PC-9 (cell line): ENCODE measurements at regions of chr1 and their contacts with region 1.

Region 1: GRCh38 chr1:93808871-93809270 is 70.1 kb downstream of the DNTTIP2 start:
- DNase-seq: peak in 1 of 2 experiments; percentile 32
- H3K4me3 ChIP-seq: no peak overlapping the region
- H3K27ac ChIP-seq: no peak overlapping the region
- H3K4me1 ChIP-seq: peaks cover 57% of the 10 kb centered on the region
- H3K27me3 ChIP-seq: no peaks in the 10 kb centered on the region
- CTCF ChIP-seq: no peak

Region 2: DNA sequence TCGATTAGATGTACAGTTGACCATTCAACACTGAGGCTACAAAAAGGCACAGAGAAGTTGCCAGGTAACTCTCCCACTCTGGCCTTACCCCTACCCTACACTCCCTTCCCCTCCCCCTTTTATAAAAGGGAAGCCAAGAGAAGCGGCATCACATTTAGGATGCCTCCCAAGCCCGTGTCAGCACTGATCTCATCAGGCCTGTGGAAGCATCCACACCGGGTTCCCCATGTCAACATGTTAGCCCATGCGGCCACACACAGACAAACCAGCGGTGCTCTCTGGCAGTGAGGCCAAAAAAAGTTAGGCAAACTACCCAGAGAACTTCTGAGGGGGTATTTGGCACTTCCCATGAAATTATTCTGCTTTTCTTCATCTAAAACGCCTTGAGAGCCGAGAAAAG is 157.2 kb before region 1 on chr1:
- CTCF ChIA-PET with region 1: interaction called, 27 read pairs
- POLR2A ChIA-PET with region 1: no interaction called
- intact Hi-C with region 1: no loop called
- DNase-seq: no peak
- H3K4me3 ChIP-seq: no peak overlapping the region
- H3K27ac ChIP-seq: 0 out of 2 replicates have a peak overlapping the region, but pooled peaks have one; percentile 25
- H3K4me1 ChIP-seq: 0 out of 2 replicates have a peak, but pooled peaks cover 6% of the 10 kb centered on the region
- H3K27me3 ChIP-seq: no peaks in the 10 kb centered on the region
- CTCF ChIP-seq: no peak

Region 3: GRCh38 chr1:93837961-93838360 is 29.1 kb after region 1 on chr1:
- CTCF ChIA-PET with region 1: no interaction called
- POLR2A ChIA-PET with region 1: no interaction called
- intact Hi-C with region 1: no loop called
- DNase-seq: peak in 1 of 2 experiments; percentile 26
- H3K4me3 ChIP-seq: no peak overlapping the region
- H3K27ac ChIP-seq: no peak overlapping the region
- H3K4me1 ChIP-seq: peaks cover 21% of the 10 kb centered on the region
- H3K27me3 ChIP-seq: no peaks in the 10 kb centered on the region
- CTCF ChIP-seq: no peak